Activated B cell treated with CpG ODN at 0.5 μM for 24 hours (primary cell): ENCODE measurements at regions of chr10 and their contacts with region 1.

Region 1: DNA sequence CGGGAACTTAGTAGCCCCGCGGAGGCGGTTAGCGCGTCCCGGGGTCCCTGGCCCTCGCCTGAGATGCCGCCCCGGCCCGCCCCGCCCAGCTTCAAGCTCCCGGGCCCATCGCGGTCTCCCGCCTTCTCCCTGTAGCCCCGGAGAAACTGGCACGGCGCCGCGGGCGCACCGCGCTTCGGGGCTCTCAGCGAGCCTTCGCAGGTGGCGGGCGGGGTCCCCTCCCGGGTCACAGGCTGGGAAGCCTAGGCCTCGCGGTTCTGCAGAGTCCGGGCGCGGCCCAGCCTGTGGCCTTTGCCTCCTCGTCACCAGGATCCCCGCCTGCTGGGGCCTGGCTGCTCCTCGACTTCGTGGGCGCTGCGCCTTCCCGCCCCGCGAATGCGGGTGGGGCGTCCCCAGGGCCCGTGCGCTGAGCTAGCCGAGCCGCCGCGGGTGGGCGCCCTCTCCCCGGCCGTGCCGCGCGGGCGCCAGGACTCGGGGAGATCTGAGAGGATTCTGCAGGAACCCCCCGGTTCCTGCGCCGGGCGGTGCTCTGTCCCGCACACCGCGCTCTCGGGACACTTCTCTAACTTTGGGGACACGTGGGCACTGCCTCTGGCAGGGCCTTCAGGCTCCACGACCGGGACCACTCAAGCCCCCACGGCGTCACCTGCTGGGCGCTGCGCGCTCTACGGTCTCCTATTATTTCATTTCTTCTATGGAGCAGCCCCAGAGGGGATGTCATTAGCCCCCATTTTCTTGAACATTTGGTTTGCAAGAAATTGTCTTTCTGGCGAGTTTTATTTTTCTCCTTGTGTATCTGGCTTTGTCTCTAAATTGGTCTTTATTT is 682 bp upstream of the RGS10 start:
- DNase-seq: peak; percentile 61
- ATAC-seq: peak; percentile 53
- H3K4me3 Mint-ChIP-seq: peak overlapping the region; percentile 91
- H3K27ac Mint-ChIP-seq: peak overlapping the region; percentile 87
- H3K4me1 Mint-ChIP-seq: peaks cover 38% of the 10 kb centered on the region
- H3K27me3 Mint-ChIP-seq: peaks cover 9% of the 10 kb centered on the region
- CTCF ChIP-seq: no peak

Region 2: GRCh38 chr10:119139464-119140067 is 403.6 kb before region 1 on chr10:
- CTCF ChIA-PET with region 1: no interaction called
- POLR2A ChIA-PET with region 1: no interaction called
- intact Hi-C with region 1: loop called (anchors 2 kb)
- DNase-seq: peak; percentile 19
- ATAC-seq: peak; percentile 57
- H3K4me3 Mint-ChIP-seq: no peak overlapping the region
- H3K27ac Mint-ChIP-seq: no peak overlapping the region
- H3K4me1 Mint-ChIP-seq: no peaks in the 10 kb centered on the region
- H3K27me3 Mint-ChIP-seq: no peaks in the 10 kb centered on the region
- CTCF ChIP-seq: no peak

Region 3: DNA sequence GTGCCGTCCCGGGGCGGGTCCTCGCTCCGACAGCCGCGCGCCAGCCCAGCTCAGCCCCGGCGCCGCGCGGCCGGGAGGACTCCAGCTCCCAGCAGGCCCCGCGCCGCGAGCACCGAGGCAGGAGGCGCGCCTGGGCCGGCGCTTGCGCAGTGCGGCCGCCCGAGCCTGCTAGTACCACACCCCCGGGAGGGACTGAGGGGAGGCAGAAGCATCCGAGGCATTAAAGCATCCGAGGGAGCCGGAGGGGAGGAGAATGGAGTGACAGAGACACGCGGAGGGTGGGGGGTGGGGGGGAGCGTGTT is 335.9 kb before region 1 on chr10 and contains the start of gene GRK5:
- CTCF ChIA-PET with region 1: interaction called, 7 read pairs
- POLR2A ChIA-PET with region 1: interaction called, 4 read pairs
- intact Hi-C with region 1: loop called (anchors 1 kb)
- DNase-seq: peak; percentile 96
- ATAC-seq: peak; percentile 81
- H3K4me3 Mint-ChIP-seq: peak within 1 kb of the TSS; percentile 93
- H3K27ac Mint-ChIP-seq: peak within 1 kb of the TSS; percentile 95
- H3K4me1 Mint-ChIP-seq: peaks cover 40% of the 10 kb centered on the region
- H3K27me3 Mint-ChIP-seq: no peaks in the 10 kb centered on the region
- CTCF ChIP-seq: no peak
- total RNA-seq, gene GRK5: 19.9 and 21.3 TPM in 2 replicates

Region 4: DNA sequence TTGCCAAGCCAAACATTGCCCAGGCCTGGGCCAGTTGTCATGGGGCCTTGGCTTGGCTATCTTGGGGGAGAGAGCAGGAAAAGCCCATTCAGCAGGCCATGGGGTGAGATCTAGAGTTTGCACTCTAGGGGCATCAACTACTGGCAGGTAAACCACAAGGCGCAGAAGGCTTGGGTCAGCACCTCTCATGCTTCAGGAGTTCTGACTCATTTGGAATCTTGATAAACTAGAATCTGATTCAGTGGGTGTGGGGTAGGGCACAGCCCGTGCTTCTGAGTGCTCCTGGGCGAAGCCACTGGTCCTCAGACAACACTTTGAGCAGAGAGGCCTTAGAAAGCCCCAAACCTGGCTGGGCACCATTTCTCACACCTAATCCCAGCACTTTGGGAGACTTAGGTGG is 81.8 kb before region 1 on chr10:
- CTCF ChIA-PET with region 1: interaction called, 3 read pairs
- POLR2A ChIA-PET with region 1: interaction called, 4 read pairs
- intact Hi-C with region 1: loop called (anchors 5 kb)
- DNase-seq: no peak
- ATAC-seq: peak; percentile 92
- H3K4me3 Mint-ChIP-seq: peak overlapping the region; percentile 33
- H3K27ac Mint-ChIP-seq: peak overlapping the region; percentile 78
- H3K4me1 Mint-ChIP-seq: peaks cover 39% of the 10 kb centered on the region
- H3K27me3 Mint-ChIP-seq: peaks cover 7% of the 10 kb centered on the region
- CTCF ChIP-seq: no peak

Region 5: GRCh38 chr10:119502209-119502608 is 41.0 kb before region 1 on chr10:
- CTCF ChIA-PET with region 1: interaction called, 5 read pairs
- POLR2A ChIA-PET with region 1: no interaction called
- intact Hi-C with region 1: loop called (anchors 5 kb)
- DNase-seq: no peak
- ATAC-seq: peak; percentile 80
- H3K4me3 Mint-ChIP-seq: peak overlapping the region; percentile 28
- H3K27ac Mint-ChIP-seq: peak overlapping the region; percentile 53
- H3K4me1 Mint-ChIP-seq: peaks cover 13% of the 10 kb centered on the region
- H3K27me3 Mint-ChIP-seq: no peaks in the 10 kb centered on the region
- CTCF ChIP-seq: no peak

Region 6: DNA sequence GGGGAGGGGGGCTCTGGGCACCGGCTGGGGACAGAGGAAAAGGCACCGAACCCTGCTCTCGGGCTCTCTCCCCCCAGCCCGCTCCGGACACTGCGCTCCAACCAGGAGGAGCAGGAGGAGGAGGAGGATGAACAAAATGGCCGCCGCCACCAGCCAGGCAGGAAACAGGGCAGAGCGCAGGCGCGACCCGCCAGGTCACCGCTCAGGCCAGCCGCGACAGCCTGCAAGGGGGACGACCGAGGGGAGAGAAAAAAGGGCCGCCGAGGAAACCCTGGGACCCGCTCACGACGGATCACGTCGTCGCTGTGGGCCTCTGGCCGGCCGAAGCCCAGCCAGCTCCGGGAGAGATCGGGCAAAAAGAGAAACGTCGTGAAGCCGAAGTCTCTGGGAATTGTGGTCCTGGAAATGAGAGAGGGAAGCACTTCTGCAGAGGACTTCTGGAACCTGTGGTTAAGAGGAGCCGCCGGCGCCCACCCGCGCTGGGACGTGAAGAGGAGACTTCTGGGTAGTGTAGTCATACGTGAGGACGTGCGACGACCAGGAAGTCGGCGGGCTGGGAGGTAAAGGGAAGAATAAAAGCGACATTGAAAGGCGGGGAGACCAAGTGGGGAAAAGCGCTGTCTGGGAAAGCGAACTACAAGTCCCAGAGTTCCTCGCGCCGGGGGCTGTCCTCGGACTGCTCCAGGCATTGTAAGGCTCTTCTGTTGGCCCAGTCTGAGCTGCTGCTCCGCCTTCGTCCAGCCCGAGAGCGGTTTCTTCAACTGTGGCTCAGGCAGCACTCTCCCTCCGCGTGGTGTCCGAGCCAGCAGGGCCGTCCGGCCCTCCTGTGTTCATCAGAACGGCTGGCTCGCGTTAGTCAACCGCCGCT is 53.6 kb after region 1 on chr10 and contains the start of gene TIAL1:
- CTCF ChIA-PET with region 1: interaction called, 3 read pairs
- POLR2A ChIA-PET with region 1: interaction called, 5 read pairs
- intact Hi-C with region 1: loop called (anchors 1 kb)
- DNase-seq: peak; percentile 84
- ATAC-seq: peak; percentile 84
- H3K4me3 Mint-ChIP-seq: peak within 1 kb of the TSS; percentile 95
- H3K27ac Mint-ChIP-seq: peak within 1 kb of the TSS; percentile 97
- H3K4me1 Mint-ChIP-seq: peaks cover 54% of the 10 kb centered on the region
- H3K27me3 Mint-ChIP-seq: no peaks in the 10 kb centered on the region
- CTCF ChIP-seq: no peak
- total RNA-seq, gene TIAL1: 142 and 155 TPM in 2 replicates